ENCODE measurements at regions of chr10 and their contacts with region 1.

Region 1: GRCh38 chr10:63720072-63720537 is 198.9 kb downstream of the REEP3 start:
- DNase-seq: no peak
- H3K4me3 ChIP-seq: no peak overlapping the region
- H3K27ac ChIP-seq: no peak overlapping the region
- H3K27me3 ChIP-seq: no peaks in the 10 kb centered on the region
- CTCF ChIP-seq: peak; percentile 98

Region 2: DNA sequence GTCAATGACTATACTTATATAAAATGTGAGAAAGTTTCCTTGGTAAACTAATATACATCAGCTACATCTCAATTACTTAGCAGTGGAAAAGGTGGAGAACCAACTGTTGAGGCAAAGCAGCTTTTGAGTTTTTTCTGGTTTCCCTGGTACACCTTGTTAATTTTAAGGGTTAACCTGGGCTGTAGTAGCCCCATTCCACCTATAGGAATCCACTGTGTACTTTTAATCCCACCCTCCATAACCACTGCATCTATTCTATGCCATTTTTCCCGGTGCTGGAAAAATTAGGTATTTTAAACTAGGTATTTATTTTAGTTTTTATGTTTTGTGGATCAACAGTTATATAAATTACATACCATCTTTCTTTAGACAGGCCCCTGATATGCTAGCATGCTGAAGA is 544.6 kb before region 1 on chr10:
- CTCF ChIA-PET with region 1: interaction called, 363 read pairs
- POLR2A ChIA-PET with region 1: no interaction called
- DNase-seq: no peak
- H3K4me3 ChIP-seq: no peak overlapping the region
- H3K27ac ChIP-seq: no peak overlapping the region
- H3K27me3 ChIP-seq: no peaks in the 10 kb centered on the region
- CTCF ChIP-seq: no peak

Region 3: GRCh38 chr10:63236113-63236935 is 483.8 kb before region 1 on chr10:
- CTCF ChIA-PET with region 1: interaction called, 10 read pairs
- POLR2A ChIA-PET with region 1: no interaction called
- DNase-seq: peak; percentile 80
- H3K4me3 ChIP-seq: no peak overlapping the region
- H3K27ac ChIP-seq: no peak overlapping the region
- H3K27me3 ChIP-seq: no peaks in the 10 kb centered on the region
- CTCF ChIP-seq: no peak

Region 4: GRCh38 chr10:63385254-63385653 is 334.9 kb before region 1 on chr10:
- CTCF ChIA-PET with region 1: no interaction called
- POLR2A ChIA-PET with region 1: no interaction called
- DNase-seq: no peak
- H3K4me3 ChIP-seq: no peak overlapping the region
- H3K27ac ChIP-seq: no peak overlapping the region
- H3K27me3 ChIP-seq: no peaks in the 10 kb centered on the region
- CTCF ChIP-seq: no peak

Region 5: GRCh38 chr10:63629363-63630084 is 90.6 kb before region 1 on chr10:
- CTCF ChIA-PET with region 1: interaction called, 135 read pairs
- POLR2A ChIA-PET with region 1: interaction called, 3 read pairs
- DNase-seq: peak; percentile 95
- H3K4me3 ChIP-seq: peak overlapping the region; percentile 79
- H3K27ac ChIP-seq: peak overlapping the region; percentile 99
- H3K27me3 ChIP-seq: no peaks in the 10 kb centered on the region
- CTCF ChIP-seq: peak; percentile 89

Region 6: GRCh38 chr10:63738410-63738809 is 18.3 kb after region 1 on chr10:
- CTCF ChIA-PET with region 1: interaction called, 17 read pairs
- POLR2A ChIA-PET with region 1: no interaction called
- DNase-seq: no peak
- H3K4me3 ChIP-seq: no peak overlapping the region
- H3K27ac ChIP-seq: no peak overlapping the region
- H3K27me3 ChIP-seq: peaks cover 1% of the 10 kb centered on the region
- CTCF ChIP-seq: no peak